ENCODE measurements at regions of chr6 and their contacts with region 1.

Region 1: DNA sequence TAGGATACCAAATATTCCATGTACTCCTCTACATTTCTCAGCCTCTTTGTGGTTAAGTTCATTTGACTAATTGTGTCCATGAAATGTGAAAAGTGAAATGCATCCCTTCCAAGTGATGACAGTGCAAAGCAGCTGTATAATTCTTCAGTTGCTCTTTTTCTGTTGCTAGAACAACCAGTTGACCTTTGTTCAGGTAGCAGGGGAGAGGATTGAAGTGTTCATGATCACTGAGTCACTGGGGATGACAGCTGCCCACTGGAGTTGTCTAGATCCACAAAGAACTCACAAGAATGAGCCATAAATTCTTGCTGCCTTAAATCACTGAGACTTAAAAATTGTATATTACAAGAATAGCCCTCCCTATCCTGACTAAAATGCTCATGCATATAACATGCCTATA is 254.6 kb downstream of the EPHA7 start:
- DNase-seq: no peak

Region 2: GRCh38 chr6:93124006-93124634 is 40.7 kb before region 1 on chr6:
- CTCF ChIA-PET with region 1: interaction called, 10 read pairs
- POLR2A ChIA-PET with region 1: no interaction called
- DNase-seq: no peak

Region 3: DNA sequence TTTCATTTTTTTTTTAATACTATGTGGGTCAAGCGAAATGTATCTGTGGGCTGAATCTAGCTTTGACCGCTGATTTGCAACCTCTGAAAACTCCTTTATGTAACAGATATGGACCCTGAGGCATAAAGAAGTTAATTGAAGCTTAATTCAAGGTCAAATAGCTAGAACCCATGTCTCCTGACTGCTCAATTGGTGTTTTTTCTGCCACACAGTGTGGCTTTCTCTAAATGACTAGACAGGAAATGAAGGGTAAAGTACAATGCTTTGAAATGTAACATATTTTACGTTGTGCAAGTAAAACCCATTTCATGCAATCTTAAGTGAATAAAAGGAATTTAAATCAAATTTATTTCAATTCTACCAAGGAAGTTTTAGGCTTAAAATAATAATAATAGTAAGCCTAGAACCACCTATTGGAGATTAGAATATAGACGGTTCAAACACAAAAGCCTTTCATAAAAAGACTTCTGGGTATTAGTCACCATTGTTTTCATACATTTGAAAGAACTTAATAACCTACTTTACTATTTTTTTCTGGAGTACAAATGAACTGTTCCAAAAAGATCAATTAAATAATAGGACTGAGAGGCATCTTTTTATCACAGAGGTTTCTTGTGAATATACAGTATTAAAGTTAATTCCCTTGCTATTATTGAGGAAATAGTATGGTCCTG is 25.2 kb before region 1 on chr6:
- CTCF ChIA-PET with region 1: no interaction called
- POLR2A ChIA-PET with region 1: no interaction called
- DNase-seq: no peak

Region 4: DNA sequence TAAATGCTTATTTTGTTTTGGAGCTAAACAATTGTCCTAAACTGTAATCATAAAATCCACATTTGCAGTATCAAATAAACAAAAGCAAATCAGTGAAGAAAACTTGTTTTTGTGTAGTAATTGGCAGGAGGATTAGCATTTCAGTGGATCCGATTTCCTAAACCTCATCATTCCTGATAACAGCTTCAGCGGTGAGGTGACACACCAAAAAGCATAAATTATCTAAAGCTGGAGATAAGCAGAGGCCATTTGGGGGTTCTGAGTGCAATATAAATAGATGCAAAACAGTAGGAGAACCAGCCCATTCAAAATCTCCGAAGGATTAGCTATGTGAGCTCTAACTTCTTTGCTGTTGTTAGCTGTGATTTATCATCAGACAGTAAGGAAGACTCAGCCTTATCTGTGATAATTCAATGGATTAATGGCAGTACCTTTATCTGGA is 18.8 kb after region 1 on chr6:
- CTCF ChIA-PET with region 1: no interaction called
- POLR2A ChIA-PET with region 1: no interaction called
- DNase-seq: peak; percentile 12